Transverse colon (tissue), 4 donors: ENCODE measurements at regions of chr15 and their contacts with region 1.

Region 1: GRCh38 chr15:86959254-86959653 is 879.6 kb downstream of the AGBL1 start:
- DNase-seq: no peak
- H3K4me3 ChIP-seq: no peak overlapping the region
- H3K27ac ChIP-seq: no peak overlapping the region
- H3K4me1 ChIP-seq: no peaks in the 10 kb centered on the region
- H3K27me3 ChIP-seq: no peaks in the 10 kb centered on the region
- CTCF ChIP-seq: no peak
- EP300 ChIP-seq: no peak
- POLR2A ChIP-seq: no peak

Region 2: GRCh38 chr15:86446253-86446640 is 513.0 kb before region 1 on chr15:
- in situ Hi-C with region 1: no loop called
- intact Hi-C with region 1: loop called (anchors 10 kb)
- DNase-seq: no peak
- H3K4me3 ChIP-seq: no peak overlapping the region
- H3K27ac ChIP-seq: no peak overlapping the region
- H3K4me1 ChIP-seq: no peaks in the 10 kb centered on the region
- H3K27me3 ChIP-seq: no peaks in the 10 kb centered on the region
- CTCF ChIP-seq: no peak
- EP300 ChIP-seq: no peak
- POLR2A ChIP-seq: no peak